ENCODE measurements at regions of chr2 and their contacts with region 1.

Region 1: DNA sequence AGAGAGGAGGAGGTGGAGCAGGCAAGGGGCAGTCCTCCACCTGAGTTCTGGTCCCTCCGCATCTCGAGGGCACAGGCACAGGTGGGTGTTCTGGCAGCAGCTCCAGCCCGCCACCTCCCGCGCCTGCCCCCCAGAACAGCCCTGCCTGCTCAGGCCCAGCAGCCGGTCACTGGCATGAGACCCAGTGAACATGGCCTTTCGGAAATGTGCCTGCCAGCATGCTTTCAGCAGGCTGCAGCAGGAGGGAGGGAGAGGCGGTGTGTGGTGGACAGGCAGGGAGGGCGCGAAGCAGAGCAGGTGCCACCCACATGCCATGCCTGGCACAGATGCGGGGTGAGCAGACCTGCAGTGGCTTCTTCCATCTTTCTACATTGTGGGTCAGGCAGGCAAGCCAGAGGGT is 3.4 kb upstream of the OR6B3 start:
- DNase-seq: no peak
- ATAC-seq: no peak
- H3K4me3 ChIP-seq: no peak overlapping the region
- H3K27ac ChIP-seq: no peak overlapping the region
- H3K4me1 ChIP-seq: no peaks in the 10 kb centered on the region
- H3K27me3 ChIP-seq: peaks cover 25% of the 10 kb centered on the region
- CTCF ChIP-seq: no peak

Region 2: GRCh38 chr2:239791526-239792404 is 264.9 kb before region 1 on chr2:
- intact Hi-C with region 1: no loop called
- DNase-seq: no peak
- ATAC-seq: peak; percentile 15
- H3K4me3 ChIP-seq: no peak overlapping the region
- H3K27ac ChIP-seq: no peak overlapping the region
- H3K4me1 ChIP-seq: no peaks in the 10 kb centered on the region
- H3K27me3 ChIP-seq: no peaks in the 10 kb centered on the region
- CTCF ChIP-seq: no peak

Region 3: DNA sequence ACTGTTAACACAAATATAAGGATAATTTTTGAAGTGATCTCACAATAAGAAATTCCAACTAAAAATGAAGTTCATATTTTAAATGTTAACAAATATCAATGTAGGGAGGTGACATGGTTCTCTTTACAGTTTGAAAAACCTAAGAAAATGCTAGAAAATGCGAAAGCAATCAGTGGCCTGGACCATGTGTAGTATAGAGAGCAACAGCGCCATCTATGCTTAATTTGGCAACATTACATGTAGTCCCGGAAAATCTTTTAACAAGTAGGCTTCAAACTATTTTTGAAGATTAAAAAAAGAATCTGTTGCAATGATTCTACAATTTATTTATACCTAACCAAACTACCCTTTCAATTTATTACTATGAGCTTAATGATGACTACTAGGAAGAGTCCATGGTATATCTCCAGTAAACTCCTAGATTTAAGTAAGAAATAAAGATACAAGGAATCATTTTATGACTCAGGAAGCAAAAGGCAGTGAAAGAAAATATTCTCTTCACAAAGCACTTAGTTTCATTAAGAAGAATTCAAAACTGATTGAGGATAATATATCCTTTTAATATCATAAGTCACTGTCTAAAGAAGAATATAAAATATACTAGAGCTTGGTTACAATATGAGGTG is 64.9 kb before region 1 on chr2:
- intact Hi-C with region 1: no loop called
- DNase-seq: no peak
- ATAC-seq: peak; percentile 74
- H3K4me3 ChIP-seq: no peak overlapping the region
- H3K27ac ChIP-seq: no peak overlapping the region
- H3K4me1 ChIP-seq: no peaks in the 10 kb centered on the region
- H3K27me3 ChIP-seq: no peaks in the 10 kb centered on the region
- CTCF ChIP-seq: peak; percentile 87

Region 4: DNA sequence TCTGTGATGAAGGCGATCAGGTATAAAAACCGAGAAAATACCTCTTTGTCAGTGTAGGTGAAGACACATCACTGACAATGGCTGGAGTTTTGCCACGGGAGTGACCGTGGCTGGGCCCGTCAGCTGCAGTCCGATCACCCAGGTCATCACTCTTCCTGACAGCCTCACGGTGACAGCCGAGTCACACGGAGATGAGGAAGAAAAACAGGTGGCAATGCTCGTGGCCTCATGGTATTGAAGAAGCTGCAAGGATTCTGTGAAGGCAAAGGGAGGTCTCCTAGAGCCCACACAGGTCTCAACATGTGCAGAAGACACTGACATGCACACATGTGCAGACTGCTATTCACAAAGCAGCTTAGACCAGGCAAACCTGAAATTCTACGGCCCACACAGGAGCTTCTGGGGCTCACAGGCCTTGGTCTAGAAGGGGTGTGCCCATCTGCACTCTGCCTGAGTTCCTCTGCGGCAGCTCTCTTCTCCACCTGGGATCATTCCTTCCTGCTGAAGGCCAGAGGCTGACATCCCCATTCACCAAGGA is 72.0 kb after region 1 on chr2:
- intact Hi-C with region 1: no loop called
- DNase-seq: no peak
- ATAC-seq: no peak
- H3K4me3 ChIP-seq: no peak overlapping the region
- H3K27ac ChIP-seq: no peak overlapping the region
- H3K4me1 ChIP-seq: no peaks in the 10 kb centered on the region
- H3K27me3 ChIP-seq: no peaks in the 10 kb centered on the region
- CTCF ChIP-seq: no peak

Region 5: DNA sequence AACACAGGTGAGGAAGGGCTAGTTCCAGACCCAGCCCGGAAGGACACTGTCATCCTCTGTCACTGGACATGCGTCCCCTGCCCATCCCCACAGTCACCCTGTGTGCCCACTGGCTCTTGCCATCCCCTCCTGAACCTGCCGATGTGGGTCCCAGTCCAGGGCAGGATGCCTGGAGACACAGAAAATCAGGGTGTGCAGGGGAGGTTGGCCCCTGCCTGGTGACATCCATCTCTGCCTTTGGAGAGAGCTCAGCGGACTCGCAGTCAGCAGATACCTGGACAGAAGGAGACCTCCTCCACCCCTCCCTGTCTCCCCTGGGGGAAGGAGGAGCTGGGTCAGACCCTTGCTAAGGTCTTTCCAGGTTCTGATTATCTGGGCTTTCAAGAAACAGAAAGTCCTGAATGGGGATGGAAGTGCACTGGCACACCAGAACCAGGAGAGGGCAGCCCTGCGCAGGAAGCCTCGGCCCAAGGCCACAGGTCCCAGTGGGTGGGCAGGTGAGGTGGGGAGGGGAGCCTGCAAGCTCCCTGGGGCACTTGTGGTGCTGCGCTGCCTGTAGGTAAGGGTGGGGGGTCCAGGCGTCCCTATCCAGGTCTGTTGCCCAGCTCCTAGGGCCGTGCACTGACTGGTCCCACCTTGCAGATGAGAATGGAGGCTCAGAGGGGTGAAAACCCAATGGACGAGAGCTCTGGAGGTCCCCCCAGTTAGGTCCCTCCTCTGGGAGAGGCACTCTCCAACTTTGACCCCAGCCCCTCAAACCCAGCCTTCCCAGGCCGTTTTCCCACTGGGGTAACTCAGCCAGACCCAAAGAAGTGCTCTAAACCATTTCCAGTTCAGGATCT is 93.5 kb after region 1 on chr2:
- intact Hi-C with region 1: loop called (anchors 5 kb)
- DNase-seq: no peak
- ATAC-seq: peak; percentile 50
- H3K4me3 ChIP-seq: no peak overlapping the region
- H3K27ac ChIP-seq: no peak overlapping the region
- H3K4me1 ChIP-seq: no peaks in the 10 kb centered on the region
- H3K27me3 ChIP-seq: peaks cover 25% of the 10 kb centered on the region
- CTCF ChIP-seq: peak; percentile 55

Region 6: GRCh38 chr2:240333985-240334384 is 277.3 kb after region 1 on chr2:
- intact Hi-C with region 1: no loop called
- DNase-seq: no peak
- ATAC-seq: no peak
- H3K4me3 ChIP-seq: no peak overlapping the region
- H3K27ac ChIP-seq: no peak overlapping the region
- H3K4me1 ChIP-seq: no peaks in the 10 kb centered on the region
- H3K27me3 ChIP-seq: no peaks in the 10 kb centered on the region
- CTCF ChIP-seq: no peak

Measured in upper lobe of right lung (tissue), 1 donor.